WTC11 (cell line): ENCODE measurements at regions of chr14 and their contacts with region 1.

Region 1: DNA sequence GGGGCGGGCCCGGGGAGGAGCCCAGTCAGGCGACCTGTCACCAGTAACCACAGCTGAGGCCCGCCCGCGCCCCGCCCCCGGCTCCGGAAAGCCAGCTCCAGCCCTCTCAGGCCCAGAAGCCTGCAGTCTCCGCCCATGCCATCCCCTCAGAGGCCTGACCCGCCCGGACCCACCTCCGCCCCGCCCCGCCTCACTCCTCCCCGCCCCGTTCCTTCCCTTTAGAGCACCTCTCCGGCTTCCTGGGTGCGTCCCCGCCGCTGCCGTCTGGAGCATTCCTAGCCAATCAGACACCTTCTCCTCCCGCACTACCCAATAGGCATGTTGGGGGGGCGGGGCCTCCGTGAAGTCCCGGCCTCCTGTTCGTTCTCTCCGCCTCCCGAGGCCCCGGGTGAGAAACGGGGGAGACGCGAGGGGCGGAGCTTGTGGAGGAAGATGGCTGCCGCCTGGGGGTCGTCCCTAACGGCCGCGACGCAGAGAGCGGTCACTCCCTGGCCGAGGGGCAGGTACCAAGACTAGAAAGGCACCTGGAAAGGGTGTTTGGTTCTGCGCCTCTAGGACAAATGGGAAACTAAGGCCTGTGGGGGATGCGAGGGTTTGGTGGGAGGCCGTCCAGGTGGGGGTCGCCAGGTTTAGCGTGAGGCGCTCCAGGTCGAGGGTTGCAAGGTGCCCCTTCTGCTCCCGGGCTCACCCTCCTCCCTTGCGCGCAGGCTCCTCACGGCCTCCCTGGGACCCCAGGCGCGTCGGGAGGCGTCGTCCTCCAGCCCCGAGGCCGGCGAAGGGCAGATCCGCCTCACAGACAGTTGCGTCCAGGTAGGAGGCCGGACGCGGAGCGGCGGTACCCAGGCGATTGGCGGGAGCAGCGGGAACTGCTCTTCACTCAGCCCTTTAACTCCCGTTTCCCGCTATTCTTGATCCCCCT is at the start of gene ISCA2:
- DNase-seq: peak; percentile 100
- ATAC-seq: peak; percentile 92
- H3K4me3 Mint-ChIP-seq: peak within 1 kb of the TSS; percentile 96
- H3K27ac Mint-ChIP-seq: peak within 1 kb of the TSS; percentile 86
- H3K4me1 Mint-ChIP-seq: peaks cover 22% of the 10 kb centered on the region
- H3K27me3 Mint-ChIP-seq: no peaks in the 10 kb centered on the region
- CTCF ChIP-seq: no peak
- total RNA-seq, gene ISCA2: 49.1 to 50.6 TPM (median 50.1 TPM) in 3 replicates

Region 2: GRCh38 chr14:74349757-74350156 is 143.8 kb before region 1 on chr14:
- CTCF ChIA-PET with region 1: interaction called, 6 read pairs
- POLR2A ChIA-PET with region 1: interaction called, 10 read pairs
- DNase-seq: no peak
- ATAC-seq: no peak
- H3K4me3 Mint-ChIP-seq: peak overlapping the region; percentile 93
- H3K27ac Mint-ChIP-seq: peak overlapping the region; percentile 85
- H3K4me1 Mint-ChIP-seq: peaks cover 50% of the 10 kb centered on the region
- H3K27me3 Mint-ChIP-seq: no peaks in the 10 kb centered on the region
- CTCF ChIP-seq: no peak

Region 3: DNA sequence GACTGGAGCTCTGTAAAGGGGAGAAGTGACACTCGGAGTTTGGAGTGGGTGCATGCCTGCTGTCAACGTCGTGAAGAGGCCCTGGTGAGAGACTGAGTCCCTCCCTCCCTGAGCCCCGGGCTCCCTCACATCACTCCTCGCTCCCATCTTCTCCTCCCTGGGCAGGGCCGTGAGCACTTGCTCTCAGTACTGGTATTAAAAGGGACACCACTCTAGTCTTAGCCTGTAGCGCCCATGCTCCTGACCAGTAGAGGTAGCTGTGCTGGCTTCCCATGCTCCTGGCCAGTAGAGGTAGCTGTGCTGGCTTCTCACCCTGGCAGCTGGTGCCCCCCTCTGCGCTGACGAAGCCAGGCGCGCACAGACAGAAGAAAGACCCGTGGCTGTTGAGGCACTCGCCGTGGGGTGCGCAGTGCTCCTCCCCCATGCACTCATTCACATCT is 14.7 kb after region 1 on chr14:
- CTCF ChIA-PET with region 1: interaction called, 19 read pairs
- POLR2A ChIA-PET with region 1: no interaction called
- DNase-seq: peak; percentile 76
- ATAC-seq: peak; percentile 92
- H3K4me3 Mint-ChIP-seq: no peak overlapping the region
- H3K27ac Mint-ChIP-seq: no peak overlapping the region
- H3K4me1 Mint-ChIP-seq: peaks cover 25% of the 10 kb centered on the region
- H3K27me3 Mint-ChIP-seq: peaks cover 8% of the 10 kb centered on the region
- CTCF ChIP-seq: no peak